Activated CD4-positive, alpha-beta T cell treated with anti-CD3 and anti-CD28 coated beads for 36 hours (primary cell): ENCODE measurements at regions of chr19 and their contacts with region 1.

Region 1: DNA sequence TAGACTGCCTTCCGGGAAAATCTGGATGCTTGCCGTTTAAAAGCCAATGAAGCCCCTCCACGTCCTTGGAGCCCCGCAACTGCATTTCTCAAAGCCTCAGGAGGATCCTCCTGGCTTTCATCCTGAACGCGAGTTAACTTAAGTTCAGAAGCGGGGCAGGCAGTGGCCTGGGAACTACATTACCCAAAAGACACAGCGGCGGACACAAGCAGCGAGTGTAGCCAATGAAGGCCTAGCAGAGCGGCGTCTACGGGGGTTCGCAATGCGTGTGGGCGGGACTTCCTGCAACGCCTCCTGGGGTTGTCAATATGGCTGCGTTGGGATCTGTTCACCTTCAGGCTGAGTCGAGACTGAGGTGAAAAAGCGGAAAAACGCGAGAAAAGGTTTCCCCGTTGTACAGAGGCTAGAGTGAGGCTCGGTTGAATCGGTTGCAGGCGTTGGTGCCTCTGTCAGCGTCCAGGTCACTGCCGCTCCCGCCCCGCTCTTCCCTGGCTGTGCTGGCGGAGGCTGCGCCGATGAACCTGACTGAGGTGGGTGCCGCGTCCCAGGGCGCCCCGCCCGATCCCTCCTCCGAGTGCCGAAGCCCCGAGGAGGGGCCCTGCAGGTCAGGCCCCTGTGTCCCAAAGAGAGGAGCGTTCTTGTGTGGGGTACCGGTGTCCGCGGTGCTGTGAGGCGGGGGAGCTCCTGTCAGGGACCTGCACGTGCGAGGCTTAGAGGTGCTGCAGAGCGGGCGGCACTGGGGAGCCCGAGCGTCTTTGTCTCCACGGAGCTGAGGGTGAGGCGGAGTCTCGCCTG is at the start of gene ZNF17:
- DNase-seq: peak; percentile 96
- ATAC-seq: peak; percentile 100
- H3K4me3 Mint-ChIP-seq: peak within 1 kb of the TSS; percentile 93
- H3K27ac Mint-ChIP-seq: peak within 1 kb of the TSS; percentile 84
- H3K4me1 Mint-ChIP-seq: peaks cover 14% of the 10 kb centered on the region
- H3K27me3 Mint-ChIP-seq: no peaks in the 10 kb centered on the region
- total RNA-seq, gene ZNF17: 6.4 to 8.3 TPM

Region 2: GRCh38 chr19:57389730-57390598 is 21.1 kb before region 1 on chr19 and contains the start of gene ZNF548:
- CTCF ChIA-PET with region 1: no interaction called
- POLR2A ChIA-PET with region 1: no interaction called
- intact Hi-C with region 1: loop called in 1 of 2 experiments (anchors 1 kb)
- DNase-seq: peak; percentile 97
- ATAC-seq: peak; percentile 99
- H3K4me3 Mint-ChIP-seq: peak within 1 kb of the TSS; percentile 90
- H3K27ac Mint-ChIP-seq: peak within 1 kb of the TSS; percentile 94
- H3K4me1 Mint-ChIP-seq: peaks cover 26% of the 10 kb centered on the region
- H3K27me3 Mint-ChIP-seq: no peaks in the 10 kb centered on the region
- total RNA-seq, gene ZNF548: 15.1 to 20.3 TPM

Region 3: GRCh38 chr19:57527136-57527881 is 116.2 kb after region 1 on chr19 and contains the start of gene ZNF549:
- CTCF ChIA-PET with region 1: no interaction called
- POLR2A ChIA-PET with region 1: no interaction called
- intact Hi-C with region 1: loop called in 1 of 2 experiments (anchors 1 kb)
- DNase-seq: peak; percentile 93
- ATAC-seq: peak; percentile 100
- H3K4me3 Mint-ChIP-seq: peak within 1 kb of the TSS; percentile 82
- H3K27ac Mint-ChIP-seq: peak within 1 kb of the TSS; percentile 84
- H3K4me1 Mint-ChIP-seq: peaks cover 18% of the 10 kb centered on the region
- H3K27me3 Mint-ChIP-seq: no peaks in the 10 kb centered on the region
- total RNA-seq, gene ZNF549: 3.7 to 4.6 TPM

Region 4: DNA sequence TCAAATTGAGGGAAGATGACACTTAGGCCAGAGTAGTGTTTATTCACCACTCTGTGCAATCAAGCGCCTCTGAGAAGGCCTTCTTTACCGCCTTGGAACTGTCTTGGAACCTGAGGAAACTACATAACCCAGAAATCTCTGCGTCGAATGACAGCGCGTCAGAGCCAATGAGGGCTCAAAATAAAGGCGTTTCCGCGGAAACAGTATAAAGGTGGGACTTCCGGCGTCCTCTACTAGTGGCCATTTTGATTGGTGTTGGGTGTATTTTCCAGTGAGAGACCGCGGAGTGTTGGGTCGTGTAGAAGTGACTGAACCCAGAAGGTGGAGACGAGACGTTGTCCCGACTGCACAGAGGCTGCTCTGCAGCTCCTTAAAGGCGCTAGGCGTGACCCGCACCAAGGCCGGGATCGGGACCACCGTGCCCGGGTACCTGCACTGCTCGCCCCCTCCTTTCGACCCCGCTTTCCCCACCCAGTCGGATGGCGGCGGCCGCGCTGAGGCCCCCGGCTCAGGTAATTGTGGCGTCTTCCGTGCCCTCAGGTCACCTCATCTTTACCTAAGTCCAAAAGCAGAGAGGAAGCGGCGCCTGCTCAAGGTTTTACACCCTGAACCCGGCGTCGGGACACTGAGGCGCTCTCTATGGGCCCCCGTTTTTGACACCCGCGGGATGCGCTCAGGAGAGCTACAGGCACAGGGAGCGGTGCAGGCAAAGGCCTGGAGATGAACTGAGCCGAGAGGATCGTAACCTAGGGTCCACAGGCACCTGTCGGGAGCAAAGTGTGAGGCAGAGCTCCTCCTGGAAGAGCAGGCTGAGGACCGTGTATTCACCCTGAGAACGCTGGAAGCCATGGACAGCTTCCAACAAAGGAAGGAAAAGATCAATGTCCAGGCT is 335.8 kb after region 1 on chr19 and contains the start of gene ZNF776:
- CTCF ChIA-PET with region 1: no interaction called
- POLR2A ChIA-PET with region 1: no interaction called
- intact Hi-C with region 1: loop called in 1 of 2 experiments (anchors 1 kb)
- DNase-seq: peak; percentile 89
- ATAC-seq: peak; percentile 98
- H3K4me3 Mint-ChIP-seq: peak within 1 kb of the TSS; percentile 93
- H3K27ac Mint-ChIP-seq: peak within 1 kb of the TSS; percentile 98
- H3K4me1 Mint-ChIP-seq: peaks cover 15% of the 10 kb centered on the region
- H3K27me3 Mint-ChIP-seq: no peaks in the 10 kb centered on the region
- total RNA-seq, gene ZNF776: 8.9 to 14.7 TPM

Region 5: GRCh38 chr19:57934820-57935665 is 524.0 kb after region 1 on chr19 and contains the start of gene ZNF418:
- CTCF ChIA-PET with region 1: no interaction called
- POLR2A ChIA-PET with region 1: no interaction called
- intact Hi-C with region 1: loop called in 1 of 2 experiments (anchors 1 kb)
- DNase-seq: peak; percentile 72
- ATAC-seq: peak; percentile 99
- H3K4me3 Mint-ChIP-seq: peak within 1 kb of the TSS; percentile 83
- H3K27ac Mint-ChIP-seq: peak within 1 kb of the TSS; percentile 90
- H3K4me1 Mint-ChIP-seq: peaks cover 9% of the 10 kb centered on the region
- H3K27me3 Mint-ChIP-seq: no peaks in the 10 kb centered on the region
- total RNA-seq, gene ZNF418: 4.6 to 4.8 TPM